ENCODE measurements at regions of chr5 and their contacts with region 1.

Region 1: GRCh38 chr5:54867310-54867944 is 118.0 kb downstream of the ESM1 start:
- DNase-seq: no peak
- H3K4me3 Mint-ChIP-seq: no peak overlapping the region
- H3K27ac Mint-ChIP-seq: no peak overlapping the region
- H3K4me1 Mint-ChIP-seq: peaks cover 30% of the 10 kb centered on the region
- H3K27me3 Mint-ChIP-seq: peaks cover 67% of the 10 kb centered on the region

Region 2: GRCh38 chr5:54243473-54244080 is 623.9 kb before region 1 on chr5:
- intact Hi-C with region 1: loop called (anchors 2 kb)
- DNase-seq: no peak
- H3K4me3 Mint-ChIP-seq: no peak overlapping the region
- H3K27ac Mint-ChIP-seq: no peak overlapping the region
- H3K4me1 Mint-ChIP-seq: no peaks in the 10 kb centered on the region
- H3K27me3 Mint-ChIP-seq: peaks cover 4% of the 10 kb centered on the region

Region 3: DNA sequence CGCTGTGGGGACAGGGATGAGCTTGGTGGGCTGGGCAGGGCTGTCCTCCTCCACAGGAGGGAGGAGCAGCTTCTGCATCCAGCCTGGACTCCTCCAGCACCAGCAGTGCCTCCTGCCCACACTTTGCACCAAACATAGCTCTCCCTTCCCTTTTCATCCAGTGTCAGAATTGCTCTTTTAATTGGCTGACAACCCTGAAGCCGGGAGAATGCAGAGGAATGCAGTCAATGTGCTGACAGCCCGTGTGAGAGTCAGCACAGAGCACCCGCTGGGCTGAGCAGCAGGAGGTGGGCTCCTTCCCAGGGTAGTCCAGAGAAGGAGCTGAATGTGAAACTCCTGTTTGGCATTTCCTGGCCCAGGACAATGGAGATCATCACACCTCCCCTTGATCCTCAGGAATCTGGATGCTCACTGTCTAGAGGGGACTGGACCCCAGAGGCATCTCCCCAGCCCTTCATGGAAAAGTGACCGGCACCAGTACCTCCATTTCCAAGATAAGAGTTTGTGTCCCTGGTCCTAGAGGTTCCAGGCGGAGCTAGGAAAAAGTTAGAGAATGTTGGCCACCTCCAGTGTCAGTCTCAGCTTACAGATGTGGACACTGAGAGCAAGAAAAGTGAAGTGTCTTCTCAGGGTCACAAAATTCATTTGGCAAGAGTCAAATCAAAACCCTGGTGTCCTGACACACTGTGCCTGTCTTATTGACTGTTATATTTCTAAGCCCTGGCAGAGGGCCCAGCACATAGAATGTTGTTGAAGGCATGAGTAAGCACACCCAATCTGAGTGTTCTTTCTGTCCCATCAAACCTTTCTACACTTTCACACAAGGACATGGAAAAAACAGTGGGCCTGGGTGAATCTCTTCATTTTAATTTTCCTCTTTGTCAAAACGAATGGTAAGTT is 147.8 kb before region 1 on chr5:
- intact Hi-C with region 1: loop called (anchors 1 kb)
- DNase-seq: no peak
- H3K4me3 Mint-ChIP-seq: no peak overlapping the region
- H3K27ac Mint-ChIP-seq: peak overlapping the region; percentile 80
- H3K4me1 Mint-ChIP-seq: peaks cover 46% of the 10 kb centered on the region
- H3K27me3 Mint-ChIP-seq: no peaks in the 10 kb centered on the region

Region 4: GRCh38 chr5:54825005-54825404 is 42.4 kb before region 1 on chr5:
- intact Hi-C with region 1: no loop called
- DNase-seq: no peak
- H3K4me3 Mint-ChIP-seq: no peak overlapping the region
- H3K27ac Mint-ChIP-seq: no peak overlapping the region
- H3K4me1 Mint-ChIP-seq: no peaks in the 10 kb centered on the region
- H3K27me3 Mint-ChIP-seq: peaks cover 31% of the 10 kb centered on the region

Region 5: DNA sequence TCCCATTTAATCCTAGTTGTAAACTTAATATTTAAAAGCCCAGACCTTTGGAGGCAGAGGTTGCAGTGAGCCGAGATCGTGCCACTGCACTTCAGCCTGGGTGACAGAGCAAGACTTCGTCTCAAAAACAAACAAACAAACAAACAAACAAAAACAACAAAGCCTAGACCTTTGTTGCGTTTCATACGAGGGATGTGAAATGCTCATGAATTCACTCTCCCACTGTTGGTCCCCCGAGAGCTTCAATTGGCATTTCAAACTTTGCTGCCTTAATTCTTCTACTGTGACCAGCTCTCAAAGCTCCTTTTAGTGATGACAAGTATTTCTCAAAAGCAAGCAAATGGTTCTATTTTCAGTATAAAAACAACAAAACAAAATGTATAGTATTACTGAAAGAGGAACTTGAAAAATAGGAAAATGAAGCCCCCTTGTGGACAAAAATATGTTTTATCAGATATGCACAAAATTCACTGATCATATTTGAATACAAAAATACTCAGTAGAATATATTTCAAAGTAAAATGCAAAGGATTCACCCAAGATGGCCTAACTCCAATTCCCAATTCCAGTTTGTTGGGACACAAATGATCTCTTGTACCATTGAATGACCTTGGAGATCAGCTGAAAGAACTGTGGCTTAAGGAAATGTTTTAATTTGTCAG is 22.4 kb before region 1 on chr5:
- intact Hi-C with region 1: loop called (anchors 1 kb)
- DNase-seq: no peak
- H3K4me3 Mint-ChIP-seq: no peak overlapping the region
- H3K27ac Mint-ChIP-seq: peak overlapping the region; percentile 59
- H3K4me1 Mint-ChIP-seq: peaks cover 32% of the 10 kb centered on the region
- H3K27me3 Mint-ChIP-seq: peaks cover 14% of the 10 kb centered on the region

Region 6: DNA sequence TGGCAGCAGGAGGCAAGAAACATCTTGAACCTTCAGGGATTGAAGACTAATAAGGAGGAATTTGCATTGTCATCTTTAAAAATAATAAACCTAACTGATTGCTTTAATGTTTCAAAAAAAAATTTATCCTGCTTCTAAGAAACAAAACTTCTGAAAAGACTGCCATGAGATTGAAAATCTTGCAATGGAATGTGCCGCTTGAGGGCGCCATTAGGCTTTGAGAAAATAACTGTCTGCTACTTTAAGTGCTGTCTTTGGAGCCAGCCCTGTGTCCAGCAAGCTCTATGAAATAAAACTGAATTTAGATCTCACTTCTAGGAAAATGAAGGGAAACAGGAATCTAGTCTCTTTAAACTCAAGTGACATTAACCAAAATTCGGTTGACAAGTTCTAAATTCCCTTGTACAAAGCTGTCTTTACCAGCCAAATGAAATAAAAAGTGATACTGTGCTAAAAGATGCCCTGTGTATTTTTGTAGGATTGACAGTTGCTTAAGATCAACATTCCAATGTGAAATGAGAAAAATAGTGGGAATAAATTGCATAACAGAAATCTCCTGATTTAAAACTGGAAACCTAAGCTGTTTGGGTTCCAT is 38.6 kb after region 1 on chr5:
- intact Hi-C with region 1: loop called (anchors 1 kb)
- DNase-seq: peak; percentile 50
- H3K4me3 Mint-ChIP-seq: no peak overlapping the region
- H3K27ac Mint-ChIP-seq: no peak overlapping the region
- H3K4me1 Mint-ChIP-seq: peaks cover 55% of the 10 kb centered on the region
- H3K27me3 Mint-ChIP-seq: peaks cover 37% of the 10 kb centered on the region

Region 7: GRCh38 chr5:54946306-54946819 is 78.9 kb after region 1 on chr5:
- intact Hi-C with region 1: no loop called
- DNase-seq: no peak
- H3K4me3 Mint-ChIP-seq: no peak overlapping the region
- H3K27ac Mint-ChIP-seq: no peak overlapping the region
- H3K4me1 Mint-ChIP-seq: peaks cover 22% of the 10 kb centered on the region
- H3K27me3 Mint-ChIP-seq: peaks cover 6% of the 10 kb centered on the region

Region 8: GRCh38 chr5:55027595-55027994 is 160.2 kb after region 1 on chr5:
- intact Hi-C with region 1: loop called (anchors 5 kb)
- DNase-seq: peak; percentile 69
- H3K4me3 Mint-ChIP-seq: peak overlapping the region; percentile 68
- H3K27ac Mint-ChIP-seq: peak overlapping the region; percentile 85
- H3K4me1 Mint-ChIP-seq: peaks cover 89% of the 10 kb centered on the region
- H3K27me3 Mint-ChIP-seq: no peaks in the 10 kb centered on the region

Region 9: GRCh38 chr5:55159763-55160492 is 292.5 kb after region 1 on chr5 and contains the start of gene GPX8:
- intact Hi-C with region 1: loop called (anchors 1 kb)
- DNase-seq: no peak
- H3K4me3 Mint-ChIP-seq: no peak within 1 kb of the TSS
- H3K27ac Mint-ChIP-seq: no peak within 1 kb of the TSS
- H3K4me1 Mint-ChIP-seq: peaks cover 8% of the 10 kb centered on the region
- H3K27me3 Mint-ChIP-seq: peaks cover 64% of the 10 kb centered on the region
- total RNA-seq, gene GPX8: not detected in 2 replicates